ENCODE measurements at regions of chr2 and their contacts with region 1.

Region 1: GRCh38 chr2:72973566-72974435 is 56.5 kb downstream of the EMX1 start:
- DNase-seq: peak; percentile 86
- H3K4me3 ChIP-seq: peak overlapping the region in 1 of 2 experiments; percentile 5; a peak in 1 of 4 replicates
- H3K27ac ChIP-seq: no peak overlapping the region
- H3K4me1 ChIP-seq: peaks cover 0 to 15% of the 10 kb centered on the region in 2 experiments; a peak in 1 of 4 replicates
- H3K27me3 ChIP-seq: no peaks in the 10 kb centered on the region
- CTCF ChIP-seq: peak; percentile 82
- EP300 ChIP-seq: no peak
- RAD21 ChIP-seq: peak; percentile 69

Region 2: GRCh38 chr2:72915907-72916742 is 57.7 kb before region 1 on chr2:
- CTCF ChIA-PET with region 1: interaction called, 10 read pairs
- POLR2A ChIA-PET with region 1: no interaction called
- DNase-seq: peak; percentile 79
- H3K4me3 ChIP-seq: no peak overlapping the region
- H3K27ac ChIP-seq: no peak overlapping the region
- H3K4me1 ChIP-seq: peaks cover 7 to 13% of the 10 kb centered on the region in 2 experiments; a peak in 2 of 4 replicates
- H3K27me3 ChIP-seq: peaks cover 88% of the 10 kb centered on the region
- CTCF ChIP-seq: no peak
- EP300 ChIP-seq: no peak
- RAD21 ChIP-seq: no peak

Region 3: DNA sequence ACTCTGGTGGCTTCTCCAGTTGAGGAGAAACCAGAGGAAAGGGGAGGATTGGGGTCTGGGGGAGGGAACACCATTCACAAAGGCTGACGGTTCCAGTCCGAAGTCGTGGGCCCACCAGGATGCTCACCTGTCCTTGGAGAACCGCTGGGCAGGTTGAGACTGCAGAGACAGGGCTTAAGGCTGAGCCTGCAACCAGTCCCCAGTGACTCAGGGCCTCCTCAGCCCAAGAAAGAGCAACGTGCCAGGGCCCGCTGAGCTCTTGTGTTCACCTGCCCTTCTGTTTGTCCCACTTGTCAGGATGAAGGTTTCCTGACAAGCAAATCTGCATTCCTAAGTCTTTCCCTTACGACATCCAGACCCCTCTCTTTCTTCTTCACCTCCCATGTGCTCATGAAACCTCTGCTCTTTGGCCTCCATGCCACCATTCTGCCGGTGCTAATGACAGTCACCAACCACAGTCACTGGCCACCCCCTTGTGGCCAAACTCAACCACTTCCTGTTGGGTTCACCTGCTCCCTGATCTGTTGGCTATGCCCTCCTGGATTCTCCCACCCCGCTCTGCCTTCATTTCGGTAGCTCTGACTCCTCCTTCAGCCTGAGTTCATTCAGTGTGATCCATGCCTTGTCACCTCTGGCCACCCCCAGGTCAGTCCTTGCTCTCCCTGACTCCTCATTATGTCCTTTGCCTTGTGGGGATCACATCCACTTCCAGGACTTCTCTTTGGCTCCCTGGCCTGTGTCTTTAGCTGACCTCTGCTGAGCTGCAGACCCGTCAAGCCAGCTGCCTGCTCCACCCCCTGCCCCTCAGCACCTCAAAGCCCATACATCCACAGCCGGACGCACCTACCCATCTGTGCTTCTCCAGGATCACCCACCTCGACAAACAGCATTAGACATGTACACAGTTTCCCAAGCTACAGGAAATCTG is 38.9 kb before region 1 on chr2:
- CTCF ChIA-PET with region 1: interaction called, 10 read pairs
- POLR2A ChIA-PET with region 1: no interaction called
- DNase-seq: no peak
- H3K4me3 ChIP-seq: no peak overlapping the region
- H3K27ac ChIP-seq: no peak overlapping the region
- H3K4me1 ChIP-seq: peaks cover 8 to 15% of the 10 kb centered on the region in 2 experiments; a peak in 1 of 4 replicates
- H3K27me3 ChIP-seq: no peaks in the 10 kb centered on the region
- CTCF ChIP-seq: peak; percentile 38; the same call in 1 of the 2 replicates
- EP300 ChIP-seq: no peak
- RAD21 ChIP-seq: peak; percentile 38; the same call in 1 of the 2 replicates

Region 4: DNA sequence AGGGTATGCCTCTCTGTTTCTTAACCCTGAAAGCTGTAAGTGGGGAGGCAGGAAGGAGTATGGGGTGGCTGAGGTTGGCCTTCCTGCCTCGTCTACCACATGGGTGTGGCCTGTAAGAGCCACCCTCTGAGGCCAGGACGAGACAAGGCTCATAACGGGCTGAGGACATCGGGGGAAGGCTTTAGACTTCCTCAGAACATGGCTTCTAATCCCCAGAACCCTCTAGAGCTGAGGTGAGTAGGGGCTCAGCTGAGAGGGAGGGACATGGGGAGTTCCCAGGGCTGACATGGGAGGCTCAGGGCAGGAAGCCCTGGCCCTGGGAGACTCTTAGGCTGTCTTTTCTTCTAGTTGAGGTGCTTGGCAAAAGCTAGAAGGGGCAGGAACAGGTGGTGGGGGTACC is 19.8 kb before region 1 on chr2:
- CTCF ChIA-PET with region 1: interaction called, 11 read pairs
- POLR2A ChIA-PET with region 1: no interaction called
- DNase-seq: no peak
- H3K4me3 ChIP-seq: no peak overlapping the region
- H3K27ac ChIP-seq: no peak overlapping the region
- H3K4me1 ChIP-seq: no peaks in the 10 kb centered on the region
- H3K27me3 ChIP-seq: no peaks in the 10 kb centered on the region
- CTCF ChIP-seq: no peak
- EP300 ChIP-seq: no peak
- RAD21 ChIP-seq: no peak

Region 5: DNA sequence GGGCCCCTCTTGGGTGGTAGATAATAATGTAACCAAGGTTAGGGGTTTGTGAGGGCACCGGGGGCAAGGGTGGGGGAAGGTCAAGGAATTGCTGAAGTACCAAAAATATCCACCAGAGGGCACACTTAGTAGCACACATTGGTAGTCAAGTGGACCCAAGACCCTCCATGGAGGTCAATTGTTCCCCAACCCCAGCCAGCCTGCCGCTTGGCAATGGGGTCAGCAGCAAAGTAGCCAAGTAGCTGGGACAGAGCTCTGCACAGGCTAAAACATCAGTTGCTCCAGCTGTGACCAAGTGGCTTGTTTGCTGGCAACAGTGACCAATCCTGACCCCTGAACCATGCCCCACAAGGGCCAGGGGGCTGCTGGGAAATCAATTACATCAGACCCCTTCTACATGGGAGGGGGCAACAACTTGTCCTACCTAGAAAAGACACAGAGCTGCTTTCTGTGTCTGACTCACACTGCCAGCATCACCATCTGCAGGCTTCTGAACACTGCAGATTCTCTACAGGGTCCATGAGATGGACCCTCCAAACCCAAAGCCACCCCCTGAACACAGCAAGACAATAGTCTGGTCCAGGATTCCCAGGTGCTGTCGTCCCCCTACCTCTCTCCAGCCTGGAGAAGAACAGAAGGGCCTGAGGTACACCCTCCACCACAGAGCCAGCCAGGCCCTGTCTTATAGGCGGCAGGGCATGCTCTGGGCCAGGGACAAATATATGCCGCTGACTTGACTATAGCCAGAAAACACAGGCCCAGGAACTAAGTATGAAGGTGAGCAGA is 19.5 kb after region 1 on chr2:
- CTCF ChIA-PET with region 1: interaction called, 35 read pairs
- POLR2A ChIA-PET with region 1: no interaction called
- DNase-seq: peak; percentile 85
- H3K4me3 ChIP-seq: no peak overlapping the region; a peak in 1 of 4 replicates
- H3K27ac ChIP-seq: no peak overlapping the region
- H3K4me1 ChIP-seq: peaks cover 0 to 14% of the 10 kb centered on the region in 2 experiments; a peak in 1 of 4 replicates
- H3K27me3 ChIP-seq: no peaks in the 10 kb centered on the region
- CTCF ChIP-seq: peak; percentile 82
- EP300 ChIP-seq: no peak
- RAD21 ChIP-seq: peak; percentile 58

Region 6: GRCh38 chr2:73028841-73029240 is 55.0 kb after region 1 on chr2:
- CTCF ChIA-PET with region 1: no interaction called
- POLR2A ChIA-PET with region 1: no interaction called
- DNase-seq: no peak
- H3K4me3 ChIP-seq: no peak overlapping the region
- H3K27ac ChIP-seq: no peak overlapping the region
- H3K4me1 ChIP-seq: no peaks in the 10 kb centered on the region; a peak in 1 of 4 replicates
- H3K27me3 ChIP-seq: no peaks in the 10 kb centered on the region
- CTCF ChIP-seq: no peak
- EP300 ChIP-seq: no peak
- RAD21 ChIP-seq: no peak